PC-3 (cell line): ENCODE measurements at regions of chr5 and their contacts with region 1.

Region 1: DNA sequence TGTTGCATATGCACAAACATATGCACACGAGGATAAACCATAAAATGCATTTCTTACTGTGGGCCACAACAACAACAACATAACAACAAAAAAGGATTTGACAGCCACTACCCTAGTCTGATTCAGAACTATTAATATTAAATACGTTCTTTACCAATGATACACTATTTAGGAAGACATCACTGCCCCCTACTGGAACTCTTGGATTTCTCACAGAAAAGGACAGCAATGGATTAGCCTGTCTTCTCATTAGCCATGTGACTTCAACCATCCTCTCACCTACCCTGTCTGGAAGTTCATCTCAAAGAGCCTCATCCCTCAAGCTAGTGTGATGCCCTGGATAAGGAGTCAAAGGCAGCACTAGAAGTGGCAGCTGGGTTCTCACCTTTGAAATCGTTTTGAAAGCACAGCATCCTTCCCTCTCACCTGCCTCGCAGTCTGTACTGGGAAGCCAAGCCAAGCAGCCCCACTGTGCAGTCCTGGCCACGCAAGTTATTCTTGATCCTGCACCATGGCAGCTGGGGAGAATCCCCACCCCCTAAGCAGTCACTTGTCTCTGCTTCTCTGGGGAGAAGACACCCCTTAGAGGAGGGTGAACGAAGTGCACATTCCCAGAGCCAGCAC is 64.6 kb downstream of the SH3TC2 start:
- DNase-seq: peak; percentile 99
- ATAC-seq: peak; percentile 27
- H3K4me3 ChIP-seq: no peak overlapping the region
- H3K27ac ChIP-seq: no peak overlapping the region
- H3K4me1 ChIP-seq: peaks cover 73% of the 10 kb centered on the region
- H3K27me3 ChIP-seq: no peaks in the 10 kb centered on the region
- CTCF ChIP-seq: peak; percentile 99

Region 2: GRCh38 chr5:148443998-148444397 is 554.3 kb before region 1 on chr5:
- CTCF ChIA-PET with region 1: no interaction called
- POLR2A ChIA-PET with region 1: no interaction called
- intact Hi-C with region 1: loop called (anchors 5 kb)
- DNase-seq: peak; percentile 91
- ATAC-seq: peak; percentile 93
- H3K4me3 ChIP-seq: no peak overlapping the region
- H3K27ac ChIP-seq: no peak overlapping the region
- H3K4me1 ChIP-seq: no peaks in the 10 kb centered on the region
- H3K27me3 ChIP-seq: no peaks in the 10 kb centered on the region
- CTCF ChIP-seq: peak; percentile 97

Region 3: DNA sequence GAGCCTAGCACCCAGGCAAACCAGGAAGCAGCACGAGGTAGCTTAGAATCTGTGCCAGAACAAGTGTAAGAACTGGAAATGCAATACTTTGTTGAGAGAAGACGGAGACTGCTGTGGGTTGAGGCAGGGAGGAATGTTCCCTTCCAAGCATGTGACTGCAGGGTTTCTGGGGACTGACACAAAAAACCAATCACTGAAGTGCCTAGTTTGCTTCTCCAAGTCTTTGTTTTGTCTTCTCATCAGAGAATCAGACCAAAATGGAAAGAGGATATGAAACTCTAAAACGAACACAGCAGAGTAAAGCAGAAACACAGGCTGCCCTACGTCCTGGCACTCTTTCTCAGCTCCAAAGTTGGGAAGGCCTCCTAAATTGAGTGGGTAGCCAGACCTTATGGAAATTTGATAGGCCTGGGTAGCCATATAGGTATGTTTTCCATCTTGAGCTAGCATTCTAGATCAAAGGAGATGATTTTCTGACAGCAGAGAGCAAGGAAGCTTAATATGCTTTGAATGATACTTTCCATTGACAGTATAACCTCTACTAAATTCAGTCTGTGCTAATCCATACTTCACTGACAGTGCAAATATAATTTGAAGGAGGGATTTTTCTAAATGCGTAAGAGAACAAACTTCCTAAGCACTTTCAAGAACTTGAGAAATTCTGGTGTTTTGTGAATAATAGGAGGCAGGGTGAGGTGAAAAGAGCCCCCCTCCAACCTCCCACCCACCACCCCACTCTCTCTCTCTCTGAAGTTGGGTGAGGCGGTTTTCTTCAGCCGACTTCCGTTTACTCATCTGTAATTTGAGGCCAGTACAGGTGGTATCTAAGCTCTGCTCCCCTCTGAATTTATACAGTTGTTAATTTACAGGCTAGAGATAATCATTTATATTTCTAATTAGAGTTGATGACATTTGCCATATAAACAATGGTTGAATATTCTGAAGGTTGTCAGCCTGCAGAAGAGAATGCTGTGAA is 166.4 kb before region 1 on chr5:
- CTCF ChIA-PET with region 1: interaction called, 8 read pairs
- POLR2A ChIA-PET with region 1: interaction called, 13 read pairs
- intact Hi-C with region 1: no loop called
- DNase-seq: peak; percentile 60
- ATAC-seq: no peak
- H3K4me3 ChIP-seq: peak overlapping the region; percentile 73
- H3K27ac ChIP-seq: no peak overlapping the region
- H3K4me1 ChIP-seq: peaks cover 72% of the 10 kb centered on the region
- H3K27me3 ChIP-seq: no peaks in the 10 kb centered on the region
- CTCF ChIP-seq: no peak

Region 4: GRCh38 chr5:148957591-148958202 is 40.6 kb before region 1 on chr5:
- CTCF ChIA-PET with region 1: interaction called, 15 read pairs
- POLR2A ChIA-PET with region 1: interaction called, 7 read pairs
- intact Hi-C with region 1: loop called (anchors 1 kb)
- DNase-seq: peak; percentile 86
- ATAC-seq: no peak
- H3K4me3 ChIP-seq: no peak overlapping the region
- H3K27ac ChIP-seq: no peak overlapping the region
- H3K4me1 ChIP-seq: peaks cover 49% of the 10 kb centered on the region
- H3K27me3 ChIP-seq: no peaks in the 10 kb centered on the region
- CTCF ChIP-seq: peak; percentile 100

Region 5: GRCh38 chr5:149011074-149011476 is 12.8 kb after region 1 on chr5:
- CTCF ChIA-PET with region 1: interaction called, 3 read pairs
- POLR2A ChIA-PET with region 1: no interaction called
- intact Hi-C with region 1: loop called (anchors 1 kb)
- DNase-seq: peak; percentile 100
- ATAC-seq: peak; percentile 88
- H3K4me3 ChIP-seq: no peak overlapping the region
- H3K27ac ChIP-seq: peak overlapping the region; percentile 52
- H3K4me1 ChIP-seq: peaks cover 54% of the 10 kb centered on the region
- H3K27me3 ChIP-seq: no peaks in the 10 kb centered on the region
- CTCF ChIP-seq: peak; percentile 28

Region 6: DNA sequence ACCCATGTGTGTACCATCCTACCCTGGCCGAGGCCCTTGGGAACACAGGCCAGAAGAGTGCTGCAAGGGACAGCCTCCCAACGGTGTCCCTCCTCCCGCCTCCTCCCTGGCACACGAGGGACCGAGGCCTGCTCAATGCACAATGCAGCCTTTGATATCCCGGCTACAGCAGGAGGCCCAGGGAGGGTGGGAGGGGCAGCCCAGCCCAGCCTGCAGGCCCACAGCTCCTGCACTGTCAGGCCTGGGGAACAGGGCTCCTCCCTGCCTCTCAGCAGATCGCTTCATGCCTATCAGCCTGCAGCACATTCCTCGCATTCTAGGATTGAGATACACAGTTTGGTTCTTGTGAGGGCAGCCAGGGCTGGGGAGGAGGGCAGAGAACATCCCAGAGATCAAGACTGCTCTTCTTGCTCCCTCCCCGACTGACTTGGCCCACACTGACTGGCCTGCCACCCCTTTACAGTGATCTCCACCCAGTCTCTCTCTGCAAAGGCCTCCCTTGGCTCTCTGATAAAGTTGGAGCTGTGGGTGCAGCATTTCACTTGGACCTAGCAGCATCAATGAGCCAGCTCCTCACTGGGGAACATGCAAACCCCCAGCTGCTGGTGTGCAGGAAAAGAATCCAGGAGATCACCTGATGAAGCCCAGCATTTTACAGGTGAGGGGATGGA is 64.9 kb after region 1 on chr5 and contains the start of gene SH3TC2:
- CTCF ChIA-PET with region 1: no interaction called
- POLR2A ChIA-PET with region 1: interaction called, 3 read pairs
- intact Hi-C with region 1: loop called (anchors 1 kb)
- DNase-seq: peak; percentile 96
- ATAC-seq: peak; percentile 76
- H3K4me3 ChIP-seq: peak within 1 kb of the TSS; percentile 47
- H3K27ac ChIP-seq: peak within 1 kb of the TSS; percentile 95
- H3K4me1 ChIP-seq: peaks cover 58% of the 10 kb centered on the region
- H3K27me3 ChIP-seq: no peaks in the 10 kb centered on the region
- CTCF ChIP-seq: no peak
- total RNA-seq, gene SH3TC2: 32.0 and 40.0 TPM in 2 replicates

Region 7: DNA sequence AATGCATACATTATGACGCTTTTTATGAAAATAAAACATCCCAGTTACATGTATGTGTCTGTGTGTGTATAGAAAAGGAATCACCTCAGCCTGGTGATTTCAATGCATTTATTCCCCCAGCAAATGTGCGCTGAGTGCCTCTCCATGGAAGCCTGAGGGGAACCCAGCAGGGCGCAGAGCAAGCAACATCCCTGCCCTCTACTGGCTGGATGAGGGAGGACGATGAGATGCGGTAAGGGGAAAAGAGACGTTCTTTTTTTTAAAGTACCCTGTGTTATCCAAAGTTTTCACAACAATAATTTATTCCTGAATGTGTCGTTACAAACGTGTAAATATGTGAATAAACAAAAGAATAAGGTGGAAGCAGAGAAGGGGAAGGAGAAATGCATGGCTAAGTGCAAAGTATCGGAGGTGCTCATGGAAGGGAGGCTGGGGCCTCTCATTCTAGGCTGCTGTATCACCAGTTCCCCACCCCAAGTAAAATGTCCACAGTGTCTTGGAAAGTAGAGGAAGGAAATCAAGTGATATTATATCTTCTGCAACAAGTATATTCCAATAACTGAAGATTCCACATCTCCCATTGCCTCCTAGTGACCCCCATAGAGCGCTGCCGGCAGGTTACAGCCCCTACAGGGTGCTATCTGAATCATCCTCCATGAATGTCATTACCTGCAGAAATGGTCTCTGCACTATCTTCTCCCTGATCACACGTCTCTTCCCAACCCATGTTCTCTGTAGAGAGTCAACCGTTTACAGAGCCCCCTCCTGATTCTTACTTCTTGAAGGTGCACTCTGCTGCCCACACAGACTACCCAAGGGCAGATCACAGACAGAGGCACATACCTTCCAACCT is 130.0 kb after region 1 on chr5:
- CTCF ChIA-PET with region 1: no interaction called
- POLR2A ChIA-PET with region 1: interaction called, 15 read pairs
- intact Hi-C with region 1: no loop called
- DNase-seq: peak; percentile 87
- ATAC-seq: peak; percentile 48
- H3K4me3 ChIP-seq: no peak overlapping the region
- H3K27ac ChIP-seq: peak overlapping the region; percentile 19
- H3K4me1 ChIP-seq: peaks cover 71% of the 10 kb centered on the region
- H3K27me3 ChIP-seq: no peaks in the 10 kb centered on the region
- CTCF ChIP-seq: peak; percentile 100